Activated CD8-positive, alpha-beta T cell treated with anti-CD3 and anti-CD28 coated beads for 36 hours (primary cell): ENCODE measurements at regions of chr16 and their contacts with region 1.

Region 1: GRCh38 chr16:57029161-57030160 is 40.1 kb downstream of the NLRC5 start:
- DNase-seq: peak; percentile 53
- ATAC-seq: peak; percentile 70
- H3K4me3 Mint-ChIP-seq: no peak overlapping the region
- H3K27ac Mint-ChIP-seq: peak overlapping the region; percentile 70
- H3K4me1 Mint-ChIP-seq: peaks cover 83% of the 10 kb centered on the region
- H3K27me3 Mint-ChIP-seq: no peaks in the 10 kb centered on the region
- CTCF ChIP-seq: no peak

Region 2: DNA sequence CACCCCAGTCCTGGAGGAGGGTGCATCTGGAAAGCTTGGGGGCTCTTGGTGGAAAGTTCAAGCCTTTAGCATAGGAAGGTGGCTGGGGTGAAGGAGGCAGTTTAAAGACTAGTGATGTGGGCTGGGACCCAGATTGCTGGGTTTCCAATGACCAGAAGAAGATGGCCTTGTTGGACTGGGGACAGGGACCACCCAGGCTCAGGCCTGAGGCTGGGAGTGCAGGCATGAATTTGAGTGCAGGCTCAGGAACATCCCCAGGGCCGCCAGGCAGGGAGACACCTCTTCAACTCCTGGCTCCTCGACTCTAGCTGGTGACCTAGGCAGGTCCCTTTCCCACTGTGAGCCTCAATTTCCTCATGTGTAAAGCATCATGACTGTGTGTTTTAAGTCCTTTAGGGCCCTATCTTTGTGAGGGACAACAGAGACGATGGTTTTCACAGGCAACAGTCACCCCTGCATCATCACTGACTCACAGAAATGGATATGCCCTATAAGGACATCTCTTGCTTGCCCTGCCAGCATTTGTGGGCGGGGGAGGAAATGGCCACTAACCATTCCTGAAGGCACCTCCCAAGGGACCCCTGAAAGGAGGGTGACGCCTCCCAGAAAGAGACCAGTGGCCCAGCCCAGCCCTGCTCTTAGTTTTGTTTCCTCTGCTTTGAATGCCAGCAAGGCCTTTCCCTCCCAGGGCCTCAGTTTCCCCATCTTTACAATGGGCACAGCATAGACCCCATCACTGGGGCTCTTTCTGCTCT is 29.0 kb before region 1 on chr16:
- CTCF ChIA-PET with region 1: interaction called, 3 read pairs
- POLR2A ChIA-PET with region 1: interaction called, 208 read pairs
- intact Hi-C with region 1: no loop called
- DNase-seq: peak; percentile 88
- ATAC-seq: peak; percentile 84
- H3K4me3 Mint-ChIP-seq: peak overlapping the region; percentile 51
- H3K27ac Mint-ChIP-seq: peak overlapping the region; percentile 99
- H3K4me1 Mint-ChIP-seq: peaks cover 94% of the 10 kb centered on the region
- H3K27me3 Mint-ChIP-seq: no peaks in the 10 kb centered on the region
- CTCF ChIP-seq: no peak

Region 3: DNA sequence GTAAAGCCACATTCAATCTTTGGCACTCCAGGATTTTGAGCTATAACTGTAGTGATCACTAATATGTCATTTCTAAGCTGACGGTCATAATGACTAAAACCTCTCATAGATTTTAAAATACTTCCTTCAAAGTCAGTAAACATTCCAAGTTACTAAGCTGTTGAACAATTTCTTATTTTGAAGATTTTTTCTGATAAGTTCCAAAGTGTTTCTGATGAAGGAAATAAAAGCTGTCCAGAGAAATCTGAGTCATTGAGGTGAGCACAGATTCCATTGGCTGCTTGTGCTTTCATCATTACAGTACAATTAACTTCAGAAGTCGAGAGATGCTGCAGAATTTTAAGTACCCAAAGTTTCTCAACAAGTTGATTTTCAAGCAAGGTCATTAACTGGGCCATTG is 16.2 kb before region 1 on chr16:
- CTCF ChIA-PET with region 1: interaction called, 6 read pairs
- POLR2A ChIA-PET with region 1: interaction called, 12 read pairs
- intact Hi-C with region 1: no loop called
- DNase-seq: no peak
- ATAC-seq: no peak
- H3K4me3 Mint-ChIP-seq: peak overlapping the region; percentile 51
- H3K27ac Mint-ChIP-seq: peak overlapping the region; percentile 97
- H3K4me1 Mint-ChIP-seq: peaks cover 81% of the 10 kb centered on the region
- H3K27me3 Mint-ChIP-seq: no peaks in the 10 kb centered on the region
- CTCF ChIP-seq: no peak

Region 4: DNA sequence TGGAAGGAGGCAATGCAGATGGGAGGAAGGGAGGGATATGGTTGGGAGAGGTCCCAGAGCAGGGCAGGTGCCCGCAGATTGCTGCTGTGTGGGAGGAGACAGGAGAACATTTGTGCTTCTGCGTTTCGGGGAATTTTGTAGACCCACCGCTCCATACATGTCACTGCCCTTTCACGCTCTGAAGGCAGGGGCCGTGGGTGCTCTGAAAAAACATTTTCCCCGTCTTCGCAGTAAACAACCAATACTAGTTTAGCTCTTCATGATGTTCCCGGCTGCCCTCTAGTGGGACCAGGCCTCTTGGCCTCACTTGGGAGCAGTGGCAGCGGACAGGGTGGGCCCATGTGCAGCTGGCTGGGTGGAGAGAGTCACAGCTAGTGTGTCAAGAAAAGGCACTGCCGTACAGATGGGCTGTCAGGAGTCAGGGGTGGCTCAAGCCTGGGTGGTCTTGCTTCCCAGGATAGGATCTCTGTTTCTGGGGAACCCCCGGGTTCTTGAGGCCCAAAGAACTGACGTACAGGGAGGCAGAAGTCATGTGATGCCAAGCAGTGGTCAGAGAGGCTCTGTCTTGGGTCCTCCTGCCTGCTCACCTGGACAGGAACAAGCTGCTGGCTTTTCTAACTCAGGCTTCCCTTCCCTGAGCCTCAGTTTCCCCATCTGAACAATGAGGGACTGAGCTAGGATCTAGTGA is 16.4 kb after region 1 on chr16:
- CTCF ChIA-PET with region 1: interaction called, 21 read pairs
- POLR2A ChIA-PET with region 1: interaction called, 213 read pairs
- intact Hi-C with region 1: no loop called
- DNase-seq: peak; percentile 77
- ATAC-seq: no peak
- H3K4me3 Mint-ChIP-seq: no peak overlapping the region
- H3K27ac Mint-ChIP-seq: peak overlapping the region; percentile 99
- H3K4me1 Mint-ChIP-seq: peaks cover 77% of the 10 kb centered on the region
- H3K27me3 Mint-ChIP-seq: no peaks in the 10 kb centered on the region
- CTCF ChIP-seq: no peak

Region 5: DNA sequence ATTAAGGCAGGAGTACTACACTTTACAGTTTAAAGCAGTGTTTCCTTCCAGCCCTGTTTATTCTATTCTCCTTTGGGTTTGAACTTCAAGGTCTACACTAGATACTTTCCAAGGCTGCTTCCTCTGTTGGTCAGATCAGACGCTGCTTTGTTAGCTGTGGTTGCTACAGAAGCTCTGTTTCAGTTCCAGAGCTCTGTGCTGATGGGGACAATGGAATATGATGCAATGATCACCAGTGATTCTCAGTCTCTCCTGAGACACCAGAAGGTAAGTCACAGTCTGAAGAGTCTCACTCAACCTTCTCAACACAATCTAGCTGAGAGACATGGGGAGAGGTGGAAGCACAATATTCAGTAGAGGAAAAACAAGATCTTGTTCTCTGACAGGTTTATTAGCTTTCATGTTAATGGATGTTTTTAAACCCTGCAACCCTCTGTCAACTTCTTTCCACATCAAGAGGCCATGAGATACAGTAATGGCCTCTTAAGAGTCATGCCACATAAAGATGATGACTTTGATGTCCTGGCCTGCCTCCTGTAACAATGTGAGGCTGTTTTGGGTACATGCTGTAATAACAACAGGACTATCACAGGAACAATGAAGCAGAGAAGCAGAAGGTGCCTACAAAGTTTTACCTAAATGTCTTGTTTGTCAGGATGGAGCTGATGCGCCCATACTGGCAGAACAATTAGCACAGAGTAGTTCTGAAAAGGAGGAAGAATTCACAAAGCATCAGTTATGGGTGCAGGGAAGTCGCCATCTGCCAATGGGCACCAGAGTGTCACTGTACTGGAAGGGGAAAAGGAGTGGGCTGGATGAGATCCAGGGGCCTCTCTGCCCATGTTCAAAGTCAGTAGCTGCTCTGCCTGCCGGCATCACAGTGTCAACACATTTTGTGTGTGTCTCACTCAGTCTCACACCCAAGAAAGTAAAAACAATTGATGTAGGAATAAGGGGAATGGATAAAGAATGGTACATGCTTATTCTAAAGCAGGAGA is 122.9 kb after region 1 on chr16:
- CTCF ChIA-PET with region 1: no interaction called
- POLR2A ChIA-PET with region 1: no interaction called
- intact Hi-C with region 1: no loop called
- DNase-seq: peak; percentile 25
- ATAC-seq: peak; percentile 78
- H3K4me3 Mint-ChIP-seq: no peak overlapping the region
- H3K27ac Mint-ChIP-seq: peak overlapping the region; percentile 19
- H3K4me1 Mint-ChIP-seq: peaks cover 21% of the 10 kb centered on the region
- H3K27me3 Mint-ChIP-seq: no peaks in the 10 kb centered on the region
- CTCF ChIP-seq: no peak